ENCODE measurements at regions of chr1 and their contacts with region 1.

Region 1: DNA sequence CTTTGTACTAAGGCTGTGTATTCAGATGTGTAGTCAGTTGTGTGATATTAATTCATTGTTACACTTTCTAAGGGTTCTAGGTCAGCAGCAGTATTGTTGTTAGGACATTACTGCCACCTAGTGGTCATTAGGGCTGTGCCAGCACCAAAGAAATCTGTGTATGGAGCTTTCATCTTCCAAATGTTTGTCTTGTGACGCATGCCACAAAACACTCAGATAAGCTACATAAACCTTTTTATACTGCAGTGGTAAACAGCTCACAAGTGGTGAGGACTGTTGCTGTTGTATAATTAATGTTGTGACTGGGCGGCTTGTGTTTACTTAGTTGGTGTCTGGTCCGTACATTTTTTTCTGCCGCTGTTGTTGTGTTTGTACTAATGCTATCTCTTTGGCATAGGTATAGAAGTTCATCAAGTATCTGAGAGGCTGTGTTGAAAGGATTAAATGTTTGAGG is 51.7 kb downstream of the S1PR1 start:
- DNase-seq: peak; percentile 50
- H3K4me3 Mint-ChIP-seq: no peak overlapping the region
- H3K27ac Mint-ChIP-seq: no peak overlapping the region
- H3K4me1 Mint-ChIP-seq: peaks cover 83% of the 10 kb centered on the region
- H3K27me3 Mint-ChIP-seq: peaks cover 1% of the 10 kb centered on the region

Region 2: DNA sequence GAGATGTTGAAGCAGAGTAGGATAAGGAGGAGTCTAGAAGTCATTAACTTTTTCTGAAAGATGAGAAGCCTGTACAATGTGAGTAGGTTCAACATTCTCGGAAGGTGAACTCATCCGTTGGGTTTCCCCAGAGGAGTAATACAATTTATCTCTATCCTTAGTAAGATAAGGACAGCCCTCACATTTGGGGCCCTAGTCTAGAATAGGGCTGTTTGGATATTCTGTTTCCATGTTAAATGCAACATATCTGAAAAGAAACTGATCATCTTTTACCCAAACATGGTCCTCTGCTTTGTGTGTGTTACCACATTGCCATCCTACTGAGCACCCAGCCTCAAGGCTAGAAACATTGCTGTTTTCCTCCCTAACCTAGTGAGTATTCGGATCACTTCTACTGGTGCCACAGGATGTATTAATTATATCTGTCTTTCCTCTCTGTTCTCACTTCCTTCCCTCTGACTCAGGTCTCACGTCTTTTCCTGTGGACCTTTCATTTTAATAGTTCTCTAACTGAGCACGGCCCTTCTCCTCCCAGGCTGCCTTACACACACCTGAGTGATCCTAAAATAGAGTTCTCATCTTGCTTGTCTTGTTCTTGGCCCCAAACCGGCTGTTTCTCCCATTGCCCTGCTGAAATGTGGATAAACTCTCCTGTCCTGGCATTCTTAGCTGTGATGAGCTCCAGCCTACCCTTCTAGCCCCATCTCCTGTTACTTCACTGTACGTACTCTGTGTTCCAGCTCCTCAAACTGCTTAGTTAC is 844.5 kb before region 1 on chr1:
- intact Hi-C with region 1: loop called (anchors 5 kb)
- DNase-seq: peak; percentile 22
- H3K4me3 Mint-ChIP-seq: peak overlapping the region; percentile 61
- H3K27ac Mint-ChIP-seq: peak overlapping the region; percentile 95
- H3K4me1 Mint-ChIP-seq: peaks cover 91% of the 10 kb centered on the region
- H3K27me3 Mint-ChIP-seq: no peaks in the 10 kb centered on the region

Region 3: GRCh38 chr1:100921109-100921706 is 367.3 kb before region 1 on chr1:
- intact Hi-C with region 1: loop called (anchors 1 kb)
- DNase-seq: no peak
- H3K4me3 Mint-ChIP-seq: no peak overlapping the region
- H3K27ac Mint-ChIP-seq: no peak overlapping the region
- H3K4me1 Mint-ChIP-seq: peaks cover 29% of the 10 kb centered on the region
- H3K27me3 Mint-ChIP-seq: no peaks in the 10 kb centered on the region

Region 4: GRCh38 chr1:101025657-101026504 is 262.6 kb before region 1 on chr1 and contains the start of gene DPH5:
- intact Hi-C with region 1: loop called (anchors 1 kb)
- DNase-seq: peak; percentile 84
- H3K4me3 Mint-ChIP-seq: peak within 1 kb of the TSS; percentile 93
- H3K27ac Mint-ChIP-seq: peak within 1 kb of the TSS; percentile 87
- H3K4me1 Mint-ChIP-seq: peaks cover 58% of the 10 kb centered on the region
- H3K27me3 Mint-ChIP-seq: no peaks in the 10 kb centered on the region
- total RNA-seq, gene DPH5: 31.7 and 32.2 TPM in 2 replicates

Region 5: DNA sequence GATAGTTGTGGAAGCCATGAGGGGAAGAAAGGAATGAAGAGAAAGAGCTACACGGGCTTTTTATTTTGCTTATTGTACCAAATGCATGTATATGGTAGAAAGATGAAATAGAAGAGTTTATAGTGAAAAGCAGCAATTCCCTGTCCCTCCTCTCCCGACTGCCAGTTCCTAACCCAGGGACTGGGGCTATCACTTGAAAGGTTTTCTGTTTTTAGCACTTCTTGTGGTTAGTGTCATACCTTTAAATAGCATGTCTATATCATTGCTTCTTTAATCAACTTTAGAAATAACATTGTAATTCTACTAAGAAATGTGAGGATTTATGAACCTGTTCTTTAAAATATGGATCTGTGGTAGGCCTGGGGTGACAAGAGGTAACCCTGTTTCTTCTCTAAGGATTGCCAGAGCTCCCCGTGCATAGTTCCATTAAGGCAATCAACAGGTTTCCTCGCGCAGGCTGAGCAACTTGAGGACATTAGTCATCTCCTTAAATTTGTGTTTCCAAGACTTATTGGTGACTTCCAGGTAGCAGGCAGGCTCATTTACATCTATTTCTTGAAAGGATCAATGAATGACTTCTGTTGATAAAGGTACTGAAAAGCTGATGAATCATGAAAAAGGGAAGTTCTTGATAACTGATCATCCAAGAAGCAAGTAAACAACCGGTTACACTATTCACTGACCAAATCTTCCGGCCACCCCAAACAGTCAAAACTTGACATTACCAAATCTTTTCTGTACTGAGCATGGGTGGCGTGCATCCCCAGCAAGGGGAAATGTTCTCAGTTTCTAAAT is 89.5 kb before region 1 on chr1:
- intact Hi-C with region 1: loop called (anchors 1 kb)
- DNase-seq: no peak
- H3K4me3 Mint-ChIP-seq: peak overlapping the region; percentile 9
- H3K27ac Mint-ChIP-seq: peak overlapping the region; percentile 85
- H3K4me1 Mint-ChIP-seq: peaks cover 35% of the 10 kb centered on the region
- H3K27me3 Mint-ChIP-seq: no peaks in the 10 kb centered on the region

Region 6: DNA sequence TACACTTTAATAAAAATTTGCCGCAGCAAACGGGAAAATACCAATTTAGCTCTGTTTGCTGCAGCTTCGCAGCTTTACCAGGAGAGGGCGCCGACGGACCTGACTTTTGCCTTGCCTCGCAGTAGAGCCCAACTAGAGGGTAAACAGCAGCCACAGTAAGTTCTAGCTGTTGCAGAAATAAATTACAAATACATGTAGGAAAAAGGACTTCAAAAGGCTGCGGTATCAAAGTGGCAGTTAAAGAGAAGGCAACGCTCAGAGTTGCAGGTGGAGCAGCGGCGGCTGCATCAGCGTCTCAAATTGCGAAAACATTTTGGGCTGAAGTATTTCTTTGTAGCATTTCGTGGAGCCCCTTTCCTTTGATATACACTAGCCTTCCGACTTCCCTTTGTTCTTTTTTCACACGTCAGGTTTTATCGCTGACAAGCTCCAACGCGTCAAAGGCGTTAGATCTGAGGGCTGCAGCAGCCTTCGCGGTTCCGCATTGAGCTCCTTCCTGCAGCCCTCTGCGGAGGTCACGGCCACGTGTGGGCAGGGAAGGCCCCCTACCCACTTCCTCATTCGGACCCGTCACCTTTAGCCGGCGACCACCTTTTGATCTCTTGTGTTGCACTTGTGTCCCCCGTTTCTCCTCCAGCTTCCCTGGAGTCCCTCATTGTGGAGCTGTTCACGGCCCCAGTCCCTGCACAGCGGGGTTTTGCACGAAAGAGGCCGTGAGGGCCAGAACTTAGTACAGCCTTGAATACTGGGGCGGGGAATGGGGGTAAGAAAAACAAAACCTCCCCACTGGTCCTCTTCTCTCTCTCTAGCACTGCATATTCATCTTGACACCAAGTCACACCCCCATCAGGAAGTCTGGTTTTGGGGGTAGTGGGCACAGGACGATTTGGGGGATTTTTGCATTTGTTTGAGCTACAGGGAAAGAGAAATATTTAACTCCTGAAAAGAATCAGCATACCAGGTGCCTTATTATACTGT is 21.1 kb after region 1 on chr1:
- intact Hi-C with region 1: loop called (anchors 1 kb)
- DNase-seq: peak; percentile 62
- H3K4me3 Mint-ChIP-seq: peak overlapping the region; percentile 80
- H3K27ac Mint-ChIP-seq: peak overlapping the region; percentile 75
- H3K4me1 Mint-ChIP-seq: peaks cover 75% of the 10 kb centered on the region
- H3K27me3 Mint-ChIP-seq: peaks cover 8% of the 10 kb centered on the region

Region 7: DNA sequence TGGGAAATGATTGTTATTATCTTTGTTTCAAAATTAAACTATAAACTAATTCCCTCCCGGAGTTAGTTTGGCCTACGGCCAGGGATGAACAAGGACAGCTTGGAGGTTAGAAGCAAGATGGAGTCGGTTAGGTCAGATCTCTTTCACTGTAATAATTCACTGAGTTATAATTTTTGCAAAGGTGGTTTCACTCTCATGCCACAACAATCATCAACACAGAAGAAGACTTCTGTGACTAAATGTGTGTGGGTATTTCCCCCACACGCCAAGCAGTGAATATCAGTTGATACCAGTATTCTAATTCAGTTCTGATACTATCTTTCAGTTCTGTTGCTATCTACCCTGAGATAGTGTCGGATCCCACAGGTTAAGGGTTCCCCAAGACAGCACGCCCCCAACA is 163.4 kb after region 1 on chr1:
- intact Hi-C with region 1: loop called (anchors 5 kb)
- DNase-seq: no peak
- H3K4me3 Mint-ChIP-seq: no peak overlapping the region
- H3K27ac Mint-ChIP-seq: no peak overlapping the region
- H3K4me1 Mint-ChIP-seq: peaks cover 34% of the 10 kb centered on the region
- H3K27me3 Mint-ChIP-seq: peaks cover 7% of the 10 kb centered on the region